T-cell (primary cell): ENCODE measurements at regions of chr22 and their contacts with region 1.

Region 1: GRCh38 chr22:39932918-39933649 is 27.1 kb upstream of the TMA7B start:
- DNase-seq: peak in 32 of 35 experiments; percentile 23 to 80 (median 56)
- ATAC-seq: peak in 3 of 4 experiments; percentile 18 to 43 (median 31)
- H3K4me3 ChIP-seq: no peak overlapping the region
- H3K4me3 Mint-ChIP-seq: peak overlapping the region; percentile 67 to 80 (median 68)
- H3K27ac ChIP-seq: peak overlapping the region; percentile 74
- H3K27ac Mint-ChIP-seq: peak overlapping the region in 1 of 2 donors; percentile 100
- H3K4me1 ChIP-seq: peaks cover 85 to 86% of the 10 kb centered on the region in 2 experiments
- H3K4me1 Mint-ChIP-seq: peaks cover 55 to 56% (median 56%) of the 10 kb centered on the region in 3 donors
- H3K27me3 ChIP-seq: no peaks in the 10 kb centered on the region
- H3K27me3 Mint-ChIP-seq: no peaks in the 10 kb centered on the region

Region 2: GRCh38 chr22:39490135-39490798 is 442.8 kb before region 1 on chr22:
- CTCF ChIA-PET with region 1: no interaction called
- POLR2A ChIA-PET with region 1: no interaction called
- DNase-seq: peak; percentile 40 to 93 (median 78)
- ATAC-seq: peak; percentile 98 to 99 (median 98)
- H3K4me3 ChIP-seq: no peak overlapping the region
- H3K4me3 Mint-ChIP-seq: peak overlapping the region in 1 of 3 donors; percentile 70
- H3K27ac ChIP-seq: no peak overlapping the region
- H3K27ac Mint-ChIP-seq: peak overlapping the region in 1 of 2 donors; percentile 69
- H3K4me1 ChIP-seq: peaks cover 0 to 12% of the 10 kb centered on the region in 2 experiments
- H3K4me1 Mint-ChIP-seq: peaks cover 8 to 17% (median 11%) of the 10 kb centered on the region in 3 donors
- H3K27me3 ChIP-seq: peaks cover 0 to 25% of the 10 kb centered on the region in 2 experiments
- H3K27me3 Mint-ChIP-seq: no peaks in the 10 kb centered on the region

Region 3: GRCh38 chr22:39908737-39909136 is 24.3 kb before region 1 on chr22:
- CTCF ChIA-PET with region 1: interaction called in 1 of 2 experiments, 10 read pairs
- POLR2A ChIA-PET with region 1: interaction called in 1 of 2 experiments, 5 read pairs
- DNase-seq: peak in 2 of 35 experiments; percentile 37 to 61
- ATAC-seq: peak; percentile 26 to 63 (median 50)
- H3K4me3 ChIP-seq: peak overlapping the region; percentile 58 to 72
- H3K4me3 Mint-ChIP-seq: peak overlapping the region; percentile 84 to 98 (median 97)
- H3K27ac ChIP-seq: peak overlapping the region; percentile 87
- H3K27ac Mint-ChIP-seq: peak overlapping the region; percentile 93 to 97
- H3K4me1 ChIP-seq: peaks cover 54 to 64% of the 10 kb centered on the region in 2 experiments
- H3K4me1 Mint-ChIP-seq: peaks cover 72 to 91% (median 82%) of the 10 kb centered on the region in 3 donors
- H3K27me3 ChIP-seq: no peaks in the 10 kb centered on the region
- H3K27me3 Mint-ChIP-seq: no peaks in the 10 kb centered on the region

Region 4: DNA sequence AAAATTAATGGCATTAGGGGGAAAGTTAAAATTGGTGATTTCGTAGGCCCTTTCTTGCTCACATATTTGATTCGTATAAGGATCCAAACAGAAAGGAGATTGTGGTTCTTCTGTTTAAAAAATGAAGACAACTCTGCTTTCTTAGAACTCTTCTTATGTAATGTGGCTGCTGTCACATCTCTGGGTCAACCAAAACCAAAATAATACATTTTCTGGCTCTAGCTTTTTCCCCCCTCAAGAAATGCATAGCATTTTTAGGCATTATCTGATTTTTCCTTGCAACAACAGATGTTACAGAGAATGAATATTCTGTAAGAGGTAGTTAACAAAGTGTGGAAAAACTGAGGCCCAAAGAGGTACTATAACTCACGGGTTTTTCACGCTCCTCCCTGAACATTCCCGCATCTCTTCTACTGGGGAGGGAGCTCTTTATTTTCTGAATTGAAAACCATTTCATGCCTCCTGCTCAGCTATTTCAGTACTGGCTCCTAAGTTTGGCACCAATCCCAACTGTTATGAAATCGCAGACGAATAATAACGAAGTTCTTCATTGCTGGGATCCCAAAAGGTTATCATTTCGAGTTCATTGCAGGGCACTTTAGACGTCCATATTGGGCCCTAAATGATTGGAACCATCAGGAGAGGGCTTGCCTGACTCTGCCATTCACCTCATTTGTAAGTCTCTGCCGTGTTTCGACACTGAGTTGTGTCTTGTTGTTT is 15.1 kb before region 1 on chr22:
- CTCF ChIA-PET with region 1: interaction called, 5 to 19 read pairs
- POLR2A ChIA-PET with region 1: interaction called, 6 to 7 read pairs
- DNase-seq: no peak
- ATAC-seq: peak in 3 of 4 experiments; percentile 13 to 20 (median 14)
- H3K4me3 ChIP-seq: peak overlapping the region in 1 of 2 donors; percentile 8
- H3K4me3 Mint-ChIP-seq: peak overlapping the region; percentile 63 to 84 (median 63)
- H3K27ac ChIP-seq: peak overlapping the region; percentile 82
- H3K27ac Mint-ChIP-seq: peak overlapping the region; percentile 93 to 94
- H3K4me1 ChIP-seq: peaks cover 80 to 89% of the 10 kb centered on the region in 2 experiments
- H3K4me1 Mint-ChIP-seq: peaks cover 90 to 98% (median 91%) of the 10 kb centered on the region in 3 donors
- H3K27me3 ChIP-seq: no peaks in the 10 kb centered on the region
- H3K27me3 Mint-ChIP-seq: no peaks in the 10 kb centered on the region

Region 5: GRCh38 chr22:39943337-39943736 is 10.3 kb after region 1 on chr22:
- CTCF ChIA-PET with region 1: interaction called in 1 of 2 experiments, 25 read pairs
- POLR2A ChIA-PET with region 1: interaction called in 1 of 2 experiments, 3 read pairs
- DNase-seq: peak in 13 of 35 experiments; percentile 26 to 64 (median 39)
- ATAC-seq: peak in 3 of 4 experiments; percentile 19 to 32 (median 25)
- H3K4me3 ChIP-seq: peak overlapping the region in 1 of 2 donors; percentile 38
- H3K4me3 Mint-ChIP-seq: peak overlapping the region in 2 of 3 donors; percentile 25 to 59
- H3K27ac ChIP-seq: peak overlapping the region; percentile 79
- H3K27ac Mint-ChIP-seq: peak overlapping the region in 1 of 2 donors; percentile 95
- H3K4me1 ChIP-seq: peaks cover 82 to 97% of the 10 kb centered on the region in 2 experiments
- H3K4me1 Mint-ChIP-seq: peaks cover 95 to 97% (median 97%) of the 10 kb centered on the region in 3 donors
- H3K27me3 ChIP-seq: no peaks in the 10 kb centered on the region
- H3K27me3 Mint-ChIP-seq: no peaks in the 10 kb centered on the region

Region 6: GRCh38 chr22:40009292-40009769 is 76.2 kb after region 1 on chr22:
- CTCF ChIA-PET with region 1: no interaction called
- POLR2A ChIA-PET with region 1: no interaction called
- DNase-seq: no peak
- ATAC-seq: peak in 2 of 4 experiments; percentile 14 to 15
- H3K4me3 ChIP-seq: peak overlapping the region in 1 of 2 donors; percentile 64
- H3K4me3 Mint-ChIP-seq: peak overlapping the region in 2 of 3 donors; percentile 66 to 76
- H3K27ac ChIP-seq: no peak overlapping the region
- H3K27ac Mint-ChIP-seq: peak overlapping the region; percentile 6 to 31
- H3K4me1 ChIP-seq: peaks cover 7 to 17% of the 10 kb centered on the region in 2 experiments
- H3K4me1 Mint-ChIP-seq: peaks cover 15 to 17% (median 15%) of the 10 kb centered on the region in 3 donors
- H3K27me3 ChIP-seq: peaks cover 0 to 40% of the 10 kb centered on the region in 2 experiments
- H3K27me3 Mint-ChIP-seq: peaks cover 3 to 44% of the 10 kb centered on the region in 2 donors